Dorsolateral prefrontal cortex (tissue), 120 donors: ENCODE measurements at regions of chr15 and their contacts with region 1.

Region 1: GRCh38 chr15:32657198-32657883 is 15.8 kb downstream of the SCG5 start:
- DNase-seq: no peak
- H3K4me3 ChIP-seq: no peak overlapping the region
- H3K27ac ChIP-seq: no peak overlapping the region
- H3K27me3 ChIP-seq: no peaks in the 10 kb centered on the region
- CTCF ChIP-seq: peak in 1 of 56 donors; percentile 11

Region 2: DNA sequence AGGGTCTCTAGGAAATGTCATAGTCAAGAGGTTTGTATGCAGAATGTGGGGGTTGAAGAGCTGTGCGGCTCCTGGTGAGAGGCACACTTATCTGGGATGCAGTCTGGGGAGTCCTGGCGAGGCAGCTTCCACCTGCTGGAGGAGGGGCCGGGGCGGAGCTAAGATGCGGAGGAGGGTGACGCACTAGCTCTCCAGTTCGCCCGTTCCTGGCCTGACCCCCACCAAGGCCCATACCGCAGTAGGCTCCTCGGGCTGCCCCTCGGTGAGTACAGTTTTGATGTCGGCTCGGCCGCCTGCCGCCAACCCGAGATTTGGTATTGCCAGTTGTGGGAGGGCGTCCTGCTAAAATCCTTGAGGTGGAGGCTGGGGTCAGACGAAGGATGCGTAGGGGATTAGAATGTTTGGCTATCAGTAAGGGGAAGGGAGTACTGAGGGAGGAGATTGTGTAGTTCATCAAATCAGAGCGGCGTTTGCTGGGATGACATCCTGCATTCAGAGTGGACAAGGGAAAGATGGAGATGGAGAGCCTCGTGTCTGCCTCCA is 15.8 kb before region 1 on chr15 and contains the start of gene SCG5:
- intact Hi-C with region 1: no loop called
- DNase-seq: peak; percentile 59 to 92 (median 82)
- H3K4me3 ChIP-seq: peak within 1 kb of the TSS; percentile 33 to 76 (median 63)
- H3K27ac ChIP-seq: peak within 1 kb of the TSS; percentile 13 to 93 (median 87)
- H3K27me3 ChIP-seq: no peaks in the 10 kb centered on the region
- CTCF ChIP-seq: peak in 2 of 56 donors; percentile 10 to 11
- total RNA-seq, gene SCG5: 61.3 to 336 (median 242) TPM

Region 3: GRCh38 chr15:32878869-32879805 is 221.8 kb after region 1 on chr15:
- intact Hi-C with region 1: no loop called
- DNase-seq: no peak
- H3K4me3 ChIP-seq: no peak overlapping the region
- H3K27ac ChIP-seq: no peak overlapping the region
- H3K27me3 ChIP-seq: no peaks in the 10 kb centered on the region
- CTCF ChIP-seq: no peak

Region 4: DNA sequence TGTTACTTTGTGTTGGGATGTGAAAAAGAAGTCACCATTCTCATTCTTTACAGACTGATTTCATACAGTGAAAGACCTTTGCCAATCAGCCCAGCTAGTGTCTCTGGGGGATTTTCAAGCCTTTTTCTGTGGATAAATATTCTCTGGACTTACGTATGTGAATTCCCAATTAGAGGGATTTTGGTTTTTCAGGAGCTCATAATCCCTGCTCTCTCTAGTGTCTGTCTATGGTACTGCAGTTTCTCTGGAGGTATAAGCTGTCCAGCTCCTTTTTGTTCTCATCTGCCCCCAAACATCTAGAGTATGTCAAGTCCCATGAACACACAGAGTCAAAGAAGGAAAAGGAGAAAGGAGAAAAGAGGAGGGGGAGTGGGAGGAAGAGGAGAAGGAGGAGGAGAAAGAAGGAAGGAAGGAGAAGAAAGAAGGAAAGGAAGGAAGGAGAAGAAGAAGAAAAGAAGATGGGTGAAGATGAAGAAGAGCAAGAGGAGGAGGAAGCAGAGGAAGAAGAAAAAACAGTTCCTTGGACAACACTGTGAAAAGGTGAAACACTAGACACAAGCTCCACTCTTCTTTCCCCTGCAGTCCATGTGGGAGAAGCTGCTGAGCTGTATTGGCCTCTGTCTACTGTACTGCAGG is 279.1 kb after region 1 on chr15:
- intact Hi-C with region 1: loop called (anchors 5 kb)
- DNase-seq: no peak
- H3K4me3 ChIP-seq: no peak overlapping the region
- H3K27ac ChIP-seq: no peak overlapping the region
- H3K27me3 ChIP-seq: no peaks in the 10 kb centered on the region
- CTCF ChIP-seq: peak in 55 of 56 donors; percentile 30 to 74 (median 57)

Region 5: GRCh38 chr15:32956006-32956405 is 298.7 kb after region 1 on chr15:
- intact Hi-C with region 1: loop called (anchors 2 to 5 kb)
- DNase-seq: no peak
- H3K4me3 ChIP-seq: no peak overlapping the region
- H3K27ac ChIP-seq: no peak overlapping the region
- H3K27me3 ChIP-seq: no peaks in the 10 kb centered on the region
- CTCF ChIP-seq: peak in 50 of 56 donors; percentile 23 to 67 (median 50)

Region 6: DNA sequence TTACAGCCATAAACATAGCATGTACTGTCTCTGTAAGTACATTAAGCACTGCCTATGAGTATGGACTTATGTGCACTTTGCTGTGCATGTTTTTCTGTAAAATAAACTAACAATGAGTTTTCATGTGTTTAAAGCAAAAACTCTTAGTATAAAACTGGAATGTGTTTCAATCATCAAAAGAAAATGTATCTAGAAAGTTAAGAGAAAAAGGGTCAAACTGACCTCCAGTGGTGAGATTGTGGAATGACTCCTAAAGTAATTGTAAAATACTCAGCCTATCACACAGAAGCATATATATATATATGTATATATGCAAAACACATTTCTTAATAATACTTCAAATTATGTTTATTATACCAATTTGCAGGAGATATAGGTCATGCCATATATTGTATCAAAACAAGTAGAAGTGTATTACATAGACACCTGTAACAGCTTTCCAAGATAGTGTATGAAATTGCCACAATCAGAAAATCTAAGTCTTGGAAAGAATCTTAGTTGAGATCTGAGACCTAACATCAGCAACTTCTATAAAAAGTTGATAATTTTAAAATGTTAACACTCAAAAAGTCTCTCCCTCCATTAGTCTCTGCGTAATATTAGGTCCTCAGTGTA is 337.6 kb after region 1 on chr15:
- intact Hi-C with region 1: loop called in 1 of 2 experiments (anchors 5 kb)
- DNase-seq: no peak
- H3K4me3 ChIP-seq: no peak overlapping the region
- H3K27ac ChIP-seq: no peak overlapping the region
- H3K27me3 ChIP-seq: no peaks in the 10 kb centered on the region
- CTCF ChIP-seq: peak; percentile 34 to 83 (median 66)